WTC11 (cell line): ENCODE measurements at regions of chr2 and their contacts with region 1.

Region 1: GRCh38 chr2:120312861-120313694 is 32.9 kb upstream of the INHBB start:
- DNase-seq: peak; percentile 78
- ATAC-seq: peak; percentile 79
- H3K4me3 Mint-ChIP-seq: peak overlapping the region; percentile 74
- H3K27ac Mint-ChIP-seq: no peak overlapping the region
- H3K4me1 Mint-ChIP-seq: peaks cover 12% of the 10 kb centered on the region
- H3K27me3 Mint-ChIP-seq: peaks cover 80% of the 10 kb centered on the region
- CTCF ChIP-seq: peak; percentile 57

Region 2: DNA sequence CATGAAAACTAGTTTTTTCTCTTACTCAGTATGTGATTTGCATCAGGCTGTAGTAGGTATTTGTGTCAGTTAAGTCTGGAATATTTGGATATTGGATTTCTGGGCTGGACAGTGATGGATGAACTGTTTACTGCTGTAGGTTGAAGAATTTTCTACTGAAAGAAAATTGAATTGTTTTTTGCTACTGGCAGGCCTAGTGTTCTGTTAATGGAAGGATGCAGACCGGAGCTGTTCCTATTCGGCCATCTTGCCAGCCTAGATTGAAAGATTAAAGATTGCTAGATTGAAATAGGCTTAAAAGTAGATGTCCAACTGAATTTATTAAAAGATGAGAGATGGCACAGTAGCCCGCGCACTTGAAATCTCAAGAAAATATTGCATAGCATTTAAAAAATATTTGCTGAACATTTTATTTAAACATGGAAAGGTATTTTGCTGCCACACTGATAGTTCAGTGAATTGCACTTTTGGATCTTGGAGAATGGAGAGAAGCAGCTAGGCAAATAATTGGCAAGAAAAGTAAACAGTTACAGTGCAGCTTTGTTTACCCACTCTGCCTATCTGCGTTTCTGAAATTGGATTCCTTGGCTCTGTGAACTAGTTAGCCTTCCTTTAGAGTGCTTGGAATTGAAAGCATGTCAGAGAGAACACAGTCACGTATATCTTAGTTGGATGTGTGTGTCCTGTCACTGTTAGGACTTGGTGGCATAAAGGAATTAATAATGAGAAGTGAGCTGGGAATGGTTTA is 246.1 kb before region 1 on chr2:
- CTCF ChIA-PET with region 1: no interaction called
- POLR2A ChIA-PET with region 1: no interaction called
- DNase-seq: no peak
- ATAC-seq: no peak
- H3K4me3 Mint-ChIP-seq: no peak overlapping the region
- H3K27ac Mint-ChIP-seq: no peak overlapping the region
- H3K4me1 Mint-ChIP-seq: peaks cover 13% of the 10 kb centered on the region
- H3K27me3 Mint-ChIP-seq: no peaks in the 10 kb centered on the region
- CTCF ChIP-seq: no peak

Region 3: GRCh38 chr2:120223034-120223912 is 89.8 kb before region 1 on chr2 and contains the start of gene TMEM185B:
- CTCF ChIA-PET with region 1: interaction called, 11 read pairs
- POLR2A ChIA-PET with region 1: no interaction called
- DNase-seq: peak; percentile 82
- ATAC-seq: peak; percentile 89
- H3K4me3 Mint-ChIP-seq: peak within 1 kb of the TSS; percentile 65
- H3K27ac Mint-ChIP-seq: no peak within 1 kb of the TSS
- H3K4me1 Mint-ChIP-seq: peaks cover 11% of the 10 kb centered on the region
- H3K27me3 Mint-ChIP-seq: peaks cover 51% of the 10 kb centered on the region
- CTCF ChIP-seq: no peak
- total RNA-seq, gene TMEM185B: 9.9 to 14.9 TPM (median 14.3 TPM) in 3 replicates

Region 4: DNA sequence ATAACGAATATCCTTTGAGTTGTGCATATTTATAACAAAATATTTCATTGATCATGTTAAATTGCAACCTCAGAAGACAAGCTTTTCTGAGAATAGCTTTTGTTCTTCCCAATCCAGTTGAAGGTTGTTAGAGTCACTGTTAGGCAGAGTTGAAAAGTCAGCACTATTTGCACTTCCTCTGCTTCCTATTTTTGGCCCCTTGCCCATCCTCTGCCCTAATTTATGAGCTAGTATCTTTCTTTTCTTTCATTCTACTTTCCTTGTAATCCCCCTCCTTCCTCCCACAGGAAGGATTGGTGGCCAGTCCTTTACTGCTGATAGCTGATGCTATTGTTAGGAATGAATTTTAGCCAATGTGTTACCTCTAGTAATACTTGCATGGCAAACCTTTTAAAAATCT is 55.6 kb before region 1 on chr2:
- CTCF ChIA-PET with region 1: interaction called, 34 read pairs
- POLR2A ChIA-PET with region 1: interaction called, 5 read pairs
- DNase-seq: no peak
- ATAC-seq: no peak
- H3K4me3 Mint-ChIP-seq: no peak overlapping the region
- H3K27ac Mint-ChIP-seq: no peak overlapping the region
- H3K4me1 Mint-ChIP-seq: peaks cover 27% of the 10 kb centered on the region
- H3K27me3 Mint-ChIP-seq: peaks cover 21% of the 10 kb centered on the region
- CTCF ChIP-seq: no peak

Region 5: GRCh38 chr2:120323214-120323613 is 10.1 kb after region 1 on chr2:
- CTCF ChIA-PET with region 1: interaction called, 11 read pairs
- POLR2A ChIA-PET with region 1: no interaction called
- DNase-seq: no peak
- ATAC-seq: no peak
- H3K4me3 Mint-ChIP-seq: no peak overlapping the region
- H3K27ac Mint-ChIP-seq: no peak overlapping the region
- H3K4me1 Mint-ChIP-seq: no peaks in the 10 kb centered on the region
- H3K27me3 Mint-ChIP-seq: peaks cover 5% of the 10 kb centered on the region
- CTCF ChIP-seq: no peak

Region 6: GRCh38 chr2:120465989-120466703 is 153.1 kb after region 1 on chr2:
- CTCF ChIA-PET with region 1: interaction called, 12 read pairs
- POLR2A ChIA-PET with region 1: no interaction called
- DNase-seq: peak; percentile 81
- ATAC-seq: peak; percentile 88
- H3K4me3 Mint-ChIP-seq: peak overlapping the region; percentile 53
- H3K27ac Mint-ChIP-seq: no peak overlapping the region
- H3K4me1 Mint-ChIP-seq: peaks cover 15% of the 10 kb centered on the region
- H3K27me3 Mint-ChIP-seq: peaks cover 100% of the 10 kb centered on the region
- CTCF ChIP-seq: no peak